ENCODE measurements at regions of chr2 and their contacts with region 1.

Region 1: DNA sequence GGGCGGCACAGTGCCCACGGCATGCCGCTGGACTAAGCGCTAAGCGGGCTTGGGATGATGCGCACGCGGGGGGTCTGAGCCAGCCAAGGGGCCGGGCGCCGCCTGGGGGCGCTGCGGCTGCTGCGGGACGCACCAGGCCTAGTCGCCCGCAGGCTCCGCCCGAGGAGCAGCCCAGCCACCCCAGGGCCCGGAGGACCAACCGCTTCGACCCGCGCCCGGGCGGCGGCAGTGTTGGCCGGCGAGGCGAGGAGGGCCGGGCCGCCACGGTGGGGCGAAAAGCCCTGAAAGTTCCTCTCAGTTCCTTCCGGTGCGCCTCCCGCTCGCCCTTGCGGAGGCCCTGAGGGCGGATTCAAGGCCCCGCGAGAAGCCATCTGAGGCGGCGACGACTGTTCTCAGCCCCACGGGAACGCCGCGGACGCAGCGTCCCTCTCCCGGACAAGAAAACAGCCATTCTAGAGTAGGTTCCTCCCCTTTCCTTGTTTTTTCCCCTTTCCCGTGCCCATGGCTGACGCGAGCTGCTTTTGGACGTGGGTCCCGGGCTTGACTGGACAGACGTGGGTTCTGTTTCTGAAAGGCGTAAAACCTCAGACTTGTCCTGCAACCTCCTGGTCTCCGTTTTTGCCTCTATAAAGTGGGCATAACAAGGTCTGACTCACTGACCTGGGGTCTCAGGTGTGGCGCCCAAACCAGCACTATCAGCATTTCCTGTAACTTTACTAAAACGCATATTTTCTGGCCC is at the start of gene ANKAR:
- DNase-seq: peak; percentile 87
- ATAC-seq: peak; percentile 92
- H3K4me3 Mint-ChIP-seq: peak within 1 kb of the TSS; percentile 83
- H3K27ac Mint-ChIP-seq: peak within 1 kb of the TSS; percentile 95
- H3K4me1 Mint-ChIP-seq: peaks cover 27% of the 10 kb centered on the region
- H3K27me3 Mint-ChIP-seq: no peaks in the 10 kb centered on the region
- total RNA-seq, gene ANKAR: 2.5 to 2.7 TPM

Region 2: DNA sequence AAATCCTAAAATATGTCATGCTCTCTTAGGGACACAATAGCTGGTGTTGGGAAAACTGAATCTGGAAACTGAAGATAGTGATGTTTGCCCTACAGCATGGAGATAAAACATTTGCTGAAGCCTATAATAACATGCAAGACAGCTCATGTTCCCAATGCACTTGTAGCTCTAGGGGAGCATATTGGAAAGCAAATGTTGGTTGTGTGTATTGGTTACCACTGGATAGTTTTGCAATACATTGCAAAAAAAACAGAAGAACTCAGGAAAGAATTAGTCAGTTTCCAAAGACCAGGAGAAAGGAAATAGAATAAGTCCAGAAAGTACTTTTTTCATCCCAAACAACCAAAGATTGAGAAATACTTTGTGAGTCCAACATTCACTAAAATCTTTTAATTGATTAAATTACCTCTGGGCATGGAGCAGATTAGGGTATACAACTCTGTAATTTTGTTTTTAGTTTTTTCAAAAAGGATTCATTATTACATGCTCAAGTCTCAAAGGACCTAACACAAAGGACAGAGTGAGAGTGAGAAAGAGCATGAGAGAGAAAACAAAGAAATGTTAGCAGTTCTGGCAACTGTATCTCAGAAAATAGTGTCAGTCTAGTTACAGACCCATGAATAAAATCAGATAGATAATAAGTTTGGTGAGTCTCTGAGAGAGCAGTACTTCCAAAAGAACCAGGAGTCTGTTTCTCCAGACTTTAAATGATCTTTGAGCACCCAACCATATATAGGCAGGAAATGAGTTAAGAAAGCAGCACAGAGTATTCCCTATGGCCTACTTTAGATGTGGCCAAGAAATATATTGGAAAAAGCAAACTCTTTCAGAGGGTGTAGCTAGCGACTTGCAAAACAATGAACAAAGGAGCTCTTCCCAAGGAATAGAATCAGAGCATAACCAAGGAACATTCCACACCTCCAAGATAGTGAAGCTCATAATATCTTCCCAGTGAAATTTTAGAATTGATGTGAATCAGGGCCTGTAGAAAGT is 737.0 kb before region 1 on chr2:
- CTCF ChIA-PET with region 1: no interaction called
- POLR2A ChIA-PET with region 1: no interaction called
- intact Hi-C with region 1: no loop called
- DNase-seq: no peak
- ATAC-seq: no peak
- H3K4me3 Mint-ChIP-seq: no peak overlapping the region
- H3K27ac Mint-ChIP-seq: no peak overlapping the region
- H3K4me1 Mint-ChIP-seq: no peaks in the 10 kb centered on the region
- H3K27me3 Mint-ChIP-seq: no peaks in the 10 kb centered on the region

Region 3: GRCh38 chr2:189698020-189698887 is 23.7 kb after region 1 on chr2:
- CTCF ChIA-PET with region 1: interaction called, 29 read pairs
- POLR2A ChIA-PET with region 1: no interaction called
- intact Hi-C with region 1: loop called (anchors 1 to 2 kb)
- DNase-seq: peak; percentile 40
- ATAC-seq: peak; percentile 72
- H3K4me3 Mint-ChIP-seq: no peak overlapping the region
- H3K27ac Mint-ChIP-seq: no peak overlapping the region
- H3K4me1 Mint-ChIP-seq: peaks cover 3% of the 10 kb centered on the region
- H3K27me3 Mint-ChIP-seq: no peaks in the 10 kb centered on the region

Region 4: DNA sequence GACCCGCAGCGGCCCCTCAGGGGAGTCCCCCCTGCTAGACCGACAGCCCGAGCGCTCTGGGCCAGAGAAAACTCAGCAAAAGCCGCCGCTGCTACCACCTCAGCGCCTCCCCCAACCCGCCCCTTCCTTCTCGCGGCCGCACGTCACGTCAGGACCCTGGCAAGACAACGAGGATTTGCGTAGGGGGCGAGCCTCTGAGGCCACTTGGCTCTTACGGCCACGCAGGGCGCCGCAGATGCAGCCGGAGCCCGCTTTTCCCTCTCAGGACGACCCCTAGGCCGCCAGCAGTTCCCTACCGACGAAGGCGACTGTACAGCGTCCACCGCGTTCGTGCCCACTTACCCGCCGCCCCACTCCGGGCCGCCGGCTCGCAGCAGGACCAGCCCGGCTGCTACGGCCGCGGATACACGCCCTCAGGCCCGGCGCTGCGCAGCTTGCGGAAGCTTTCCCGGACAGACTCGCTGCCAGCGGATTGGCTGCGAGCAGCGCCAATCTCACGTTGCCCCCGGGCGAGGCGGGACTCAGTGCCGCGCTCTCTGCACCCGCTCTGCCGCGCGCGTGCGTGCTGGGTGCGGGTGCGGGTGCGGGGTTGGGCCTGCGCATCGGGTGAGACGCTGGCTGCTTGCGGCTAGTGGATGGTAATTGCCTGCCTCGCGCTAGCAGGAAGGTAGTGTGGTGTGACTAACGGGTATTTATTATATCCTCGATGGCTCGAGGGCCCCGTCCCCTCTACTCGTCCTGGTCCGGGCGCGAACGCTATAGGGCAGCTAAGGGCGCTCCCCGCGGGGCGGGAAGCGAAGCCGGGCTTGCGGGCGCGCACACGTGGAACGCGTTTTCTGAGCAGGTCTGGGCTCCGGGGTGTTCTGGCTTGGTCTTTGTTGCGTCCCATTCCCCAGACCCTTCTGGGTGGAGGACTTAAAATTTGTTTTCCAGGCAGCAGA is 109.7 kb after region 1 on chr2 and contains the starts of genes ORMDL1 and PMS1:
- CTCF ChIA-PET with region 1: interaction called, 3 read pairs
- POLR2A ChIA-PET with region 1: no interaction called
- intact Hi-C with region 1: loop called in 1 of 2 experiments (anchors 1 kb)
- DNase-seq: peak; percentile 96
- ATAC-seq: peak; percentile 92
- H3K4me3 Mint-ChIP-seq: peak within 1 kb of the TSS; percentile 74
- H3K27ac Mint-ChIP-seq: peak within 1 kb of the TSS; percentile 94
- H3K4me1 Mint-ChIP-seq: peaks cover 52% of the 10 kb centered on the region
- H3K27me3 Mint-ChIP-seq: no peaks in the 10 kb centered on the region
- total RNA-seq, gene ORMDL1: 45.2 to 49.2 TPM
- total RNA-seq, gene PMS1: 45.8 to 47.4 TPM

Region 5: DNA sequence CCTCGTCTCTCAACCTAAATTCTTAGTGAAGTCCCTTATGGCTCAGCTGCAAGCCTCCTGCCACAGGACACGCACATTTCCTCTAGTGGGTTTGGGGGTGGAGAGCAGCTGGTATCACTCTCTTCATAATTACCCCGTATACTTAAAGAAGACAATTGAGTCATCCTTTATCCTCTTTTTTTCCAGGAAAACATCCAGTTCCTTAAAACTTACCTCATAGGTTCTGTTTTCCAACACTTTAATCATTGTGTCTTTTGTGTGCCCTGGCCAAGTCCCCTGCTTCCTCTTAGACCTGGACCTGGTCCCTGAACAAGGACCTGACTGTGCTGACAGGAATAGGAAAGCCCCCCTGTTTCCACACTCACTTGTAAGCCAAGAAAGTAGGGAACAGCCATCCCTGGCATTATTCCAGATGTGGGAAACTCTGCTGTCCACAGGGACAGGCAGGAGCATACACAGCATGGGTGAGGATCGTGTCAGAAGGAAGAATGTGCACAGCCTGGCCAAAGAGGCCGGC is 1528.4 kb after region 1 on chr2:
- CTCF ChIA-PET with region 1: no interaction called
- POLR2A ChIA-PET with region 1: no interaction called
- intact Hi-C with region 1: no loop called
- DNase-seq: peak; percentile 33
- ATAC-seq: peak; percentile 32
- H3K4me3 Mint-ChIP-seq: no peak overlapping the region
- H3K27ac Mint-ChIP-seq: peak overlapping the region; percentile 59
- H3K4me1 Mint-ChIP-seq: peaks cover 47% of the 10 kb centered on the region
- H3K27me3 Mint-ChIP-seq: no peaks in the 10 kb centered on the region